T-cell (primary cell): ENCODE measurements at regions of chr1 and their contacts with region 1.

Region 1: GRCh38 chr1:116418091-116418830 is 45.2 kb downstream of the ATP1A1 start:
- DNase-seq: peak; percentile 77 to 92 (median 84)
- ATAC-seq: peak; percentile 95 to 97 (median 96)
- H3K4me3 ChIP-seq: peak overlapping the region; percentile 60 to 74
- H3K4me3 Mint-ChIP-seq: peak overlapping the region; percentile 85 to 92 (median 90)
- H3K27ac ChIP-seq: peak overlapping the region; percentile 75
- H3K27ac Mint-ChIP-seq: peak overlapping the region; percentile 91 to 93
- H3K4me1 ChIP-seq: peaks cover 10 to 21% of the 10 kb centered on the region in 2 experiments
- H3K4me1 Mint-ChIP-seq: peaks cover 32 to 43% (median 36%) of the 10 kb centered on the region in 3 donors
- H3K27me3 ChIP-seq: no peaks in the 10 kb centered on the region
- H3K27me3 Mint-ChIP-seq: no peaks in the 10 kb centered on the region

Region 2: DNA sequence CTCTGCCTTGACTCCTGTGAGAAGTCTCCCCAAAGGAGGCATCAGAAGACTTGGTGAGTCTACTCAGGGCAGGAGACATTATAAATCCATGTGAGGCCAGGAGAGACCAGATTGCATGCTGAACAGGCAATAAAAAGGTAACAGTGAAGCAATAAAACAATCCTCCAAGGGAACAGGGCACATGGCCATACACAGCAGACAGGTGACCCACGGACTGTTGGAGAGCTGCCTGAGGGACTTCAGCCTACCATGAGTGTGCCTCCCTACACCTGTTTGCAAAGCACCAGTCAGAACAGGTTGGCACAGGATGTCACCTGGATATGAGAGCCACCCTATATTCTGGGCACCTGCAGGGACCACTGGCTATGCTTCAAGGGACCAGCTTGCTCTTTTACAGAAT is 239.4 kb before region 1 on chr1:
- CTCF ChIA-PET with region 1: no interaction called
- POLR2A ChIA-PET with region 1: no interaction called
- DNase-seq: no peak
- ATAC-seq: no peak
- H3K4me3 ChIP-seq: no peak overlapping the region
- H3K4me3 Mint-ChIP-seq: no peak overlapping the region
- H3K27ac ChIP-seq: no peak overlapping the region
- H3K27ac Mint-ChIP-seq: no peak overlapping the region
- H3K4me1 ChIP-seq: no peaks in the 10 kb centered on the region
- H3K4me1 Mint-ChIP-seq: no peaks in the 10 kb centered on the region
- H3K27me3 ChIP-seq: peaks cover 0 to 3% of the 10 kb centered on the region in 2 experiments
- H3K27me3 Mint-ChIP-seq: peaks cover 11 to 13% of the 10 kb centered on the region in 2 donors

Region 3: DNA sequence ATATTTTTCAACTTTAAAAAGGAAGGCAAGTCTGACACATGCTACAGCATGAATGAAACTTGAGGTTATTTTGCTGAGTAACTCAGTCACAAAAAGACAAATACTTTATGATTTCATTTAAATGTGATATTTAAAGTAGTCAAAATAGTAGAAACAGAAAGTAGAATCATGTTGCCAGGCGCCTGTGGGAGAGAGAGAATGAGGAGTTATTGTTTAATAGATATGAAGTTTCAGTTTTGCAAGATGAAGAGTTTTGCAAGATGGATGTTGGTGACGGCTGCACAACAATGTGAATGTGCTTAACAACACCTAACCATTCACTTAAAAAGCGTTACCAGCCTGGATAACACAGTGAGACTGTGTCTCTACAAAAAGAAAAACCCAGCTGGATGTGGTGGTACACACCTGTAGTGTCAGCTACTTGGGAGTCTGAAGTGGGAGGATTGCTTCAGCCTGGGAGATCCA is 65.9 kb before region 1 on chr1:
- CTCF ChIA-PET with region 1: no interaction called
- POLR2A ChIA-PET with region 1: interaction called in 1 of 2 experiments, 17 read pairs
- DNase-seq: no peak
- ATAC-seq: peak in 3 of 4 experiments; percentile 35 to 54 (median 39)
- H3K4me3 ChIP-seq: no peak overlapping the region
- H3K4me3 Mint-ChIP-seq: peak overlapping the region; percentile 19 to 67 (median 47)
- H3K27ac ChIP-seq: no peak overlapping the region
- H3K27ac Mint-ChIP-seq: peak overlapping the region; percentile 71 to 76
- H3K4me1 ChIP-seq: peaks cover 12 to 13% of the 10 kb centered on the region in 2 experiments
- H3K4me1 Mint-ChIP-seq: peaks cover 43 to 66% (median 55%) of the 10 kb centered on the region in 3 donors
- H3K27me3 ChIP-seq: no peaks in the 10 kb centered on the region
- H3K27me3 Mint-ChIP-seq: no peaks in the 10 kb centered on the region

Region 4: DNA sequence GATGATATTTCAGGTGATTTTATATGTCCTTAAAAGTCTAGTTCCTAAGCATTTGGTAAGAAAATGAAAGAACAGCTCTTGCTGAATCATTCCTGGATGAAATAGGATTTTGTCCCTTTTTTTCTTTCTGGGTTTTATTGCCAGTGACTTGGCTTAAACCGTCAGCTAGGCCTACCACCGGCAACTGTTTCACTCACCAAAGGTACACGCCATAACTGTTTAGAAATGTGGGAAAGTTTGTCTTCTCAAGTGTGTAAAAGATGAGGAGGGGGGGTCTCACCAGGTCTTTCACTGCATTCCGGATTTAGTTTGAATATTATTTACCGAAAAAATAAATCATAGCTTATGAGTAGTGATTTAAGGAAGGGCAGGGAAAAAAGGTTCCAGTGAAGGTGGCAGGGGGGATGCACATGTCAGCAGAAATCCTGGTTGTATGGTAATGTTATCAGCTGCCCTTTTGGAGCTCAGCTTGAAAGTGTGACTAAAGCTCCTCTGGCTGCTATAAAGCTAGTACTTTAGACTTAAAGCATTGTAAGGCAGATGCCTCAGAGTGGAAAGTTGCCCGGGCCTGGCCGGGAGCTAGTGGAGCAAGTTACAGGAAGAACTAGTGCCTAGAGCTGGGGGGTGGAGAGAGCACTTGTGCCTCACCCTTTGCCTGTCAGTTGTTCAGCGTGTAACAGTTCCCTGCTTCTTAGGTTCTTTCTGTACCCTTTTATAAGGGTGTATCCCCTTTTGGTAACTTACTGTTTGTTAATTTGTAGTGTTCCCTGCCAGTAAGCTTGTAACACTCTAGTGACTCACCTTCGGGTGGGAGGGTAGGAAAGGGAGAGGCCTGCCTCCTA is 42.2 kb before region 1 on chr1:
- CTCF ChIA-PET with region 1: interaction called in 1 of 2 experiments, 4 read pairs
- POLR2A ChIA-PET with region 1: interaction called, 4 to 11 read pairs
- DNase-seq: peak in 8 of 35 experiments; percentile 11 to 50 (median 17)
- ATAC-seq: no peak
- H3K4me3 ChIP-seq: peak overlapping the region; percentile 29 to 93
- H3K4me3 Mint-ChIP-seq: peak overlapping the region; percentile 95 to 97 (median 96)
- H3K27ac ChIP-seq: peak overlapping the region; percentile 86
- H3K27ac Mint-ChIP-seq: peak overlapping the region; percentile 97 to 98
- H3K4me1 ChIP-seq: peaks cover 40 to 68% of the 10 kb centered on the region in 2 experiments
- H3K4me1 Mint-ChIP-seq: peaks cover 67 to 75% (median 74%) of the 10 kb centered on the region in 3 donors
- H3K27me3 ChIP-seq: no peaks in the 10 kb centered on the region
- H3K27me3 Mint-ChIP-seq: no peaks in the 10 kb centered on the region

Region 5: DNA sequence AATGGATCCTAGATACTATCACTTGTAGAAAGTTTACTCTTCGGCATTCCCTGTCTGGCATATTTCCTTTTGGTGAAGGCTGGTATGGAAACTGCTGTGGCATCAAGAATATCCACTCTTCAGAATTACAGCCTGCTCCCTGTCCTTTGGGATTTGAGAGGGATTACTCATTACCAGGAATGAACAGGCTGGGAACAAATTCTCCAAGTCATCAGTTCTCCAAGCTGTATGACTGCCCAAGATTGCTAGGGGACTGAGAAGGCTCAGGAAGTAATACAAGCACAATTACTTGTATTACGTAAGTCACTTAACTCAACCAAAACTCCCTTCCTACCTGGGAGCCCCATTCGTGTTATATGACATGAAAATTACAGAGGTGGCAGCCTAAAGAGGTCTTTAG is 102.9 kb after region 1 on chr1:
- CTCF ChIA-PET with region 1: no interaction called
- POLR2A ChIA-PET with region 1: no interaction called
- DNase-seq: no peak
- ATAC-seq: no peak
- H3K4me3 ChIP-seq: no peak overlapping the region
- H3K4me3 Mint-ChIP-seq: no peak overlapping the region
- H3K27ac ChIP-seq: no peak overlapping the region
- H3K27ac Mint-ChIP-seq: no peak overlapping the region
- H3K4me1 ChIP-seq: peaks cover 0 to 9% of the 10 kb centered on the region in 2 experiments
- H3K4me1 Mint-ChIP-seq: peaks cover 8 to 16% (median 10%) of the 10 kb centered on the region in 3 donors
- H3K27me3 ChIP-seq: no peaks in the 10 kb centered on the region
- H3K27me3 Mint-ChIP-seq: no peaks in the 10 kb centered on the region